ENCODE measurements at regions of chr2 and their contacts with region 1.

Region 1: DNA sequence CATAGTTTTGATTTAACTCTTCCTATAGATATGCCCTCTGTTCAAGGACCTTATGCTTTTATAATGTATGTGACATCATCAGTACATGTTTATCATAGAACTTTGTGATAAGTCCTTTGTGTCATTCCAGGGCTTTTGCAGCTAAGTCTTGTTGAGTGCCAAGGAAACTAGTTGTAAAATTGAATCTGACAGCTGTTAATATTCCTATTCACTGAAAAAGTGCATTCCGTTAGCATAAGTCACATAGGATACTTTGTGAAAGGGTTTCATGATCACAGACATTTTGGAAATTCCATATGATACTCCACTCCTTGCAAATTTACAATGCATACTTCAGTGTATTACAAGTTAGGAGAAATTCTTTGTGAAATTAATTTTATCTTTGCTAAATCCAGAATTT is 503.4 kb downstream of the CCDC85A start:
- DNase-seq: no peak
- H3K4me3 ChIP-seq: no peak overlapping the region
- H3K27ac ChIP-seq: no peak overlapping the region
- H3K4me1 ChIP-seq: no peaks in the 10 kb centered on the region
- H3K27me3 ChIP-seq: no peaks in the 10 kb centered on the region
- CTCF ChIP-seq: no peak
- POLR2A ChIP-seq: no peak

Region 2: GRCh38 chr2:56784046-56784445 is 96.9 kb after region 1 on chr2:
- intact Hi-C with region 1: no loop called
- DNase-seq: no peak
- H3K4me3 ChIP-seq: no peak overlapping the region
- H3K27ac ChIP-seq: no peak overlapping the region
- H3K4me1 ChIP-seq: no peaks in the 10 kb centered on the region
- H3K27me3 ChIP-seq: no peaks in the 10 kb centered on the region
- CTCF ChIP-seq: no peak
- POLR2A ChIP-seq: no peak

Region 3: GRCh38 chr2:56871644-56872043 is 184.5 kb after region 1 on chr2:
- intact Hi-C with region 1: no loop called
- DNase-seq: no peak
- H3K4me3 ChIP-seq: no peak overlapping the region
- H3K27ac ChIP-seq: no peak overlapping the region
- H3K4me1 ChIP-seq: no peaks in the 10 kb centered on the region
- H3K27me3 ChIP-seq: no peaks in the 10 kb centered on the region
- CTCF ChIP-seq: no peak
- POLR2A ChIP-seq: no peak

Region 4: GRCh38 chr2:57199663-57200062 is 512.5 kb after region 1 on chr2:
- intact Hi-C with region 1: loop called (anchors 5 kb)
- DNase-seq: no peak
- H3K4me3 ChIP-seq: no peak overlapping the region
- H3K27ac ChIP-seq: no peak overlapping the region
- H3K4me1 ChIP-seq: no peaks in the 10 kb centered on the region
- H3K27me3 ChIP-seq: no peaks in the 10 kb centered on the region
- CTCF ChIP-seq: no peak
- POLR2A ChIP-seq: no peak